Activated CD4-positive, alpha-beta T cell treated with anti-CD3 and anti-CD28 coated beads, Interleukin-2, amount 10 ng/mL, durations not matched to agents 24 days and 14 days (primary cell): ENCODE measurements at regions of chr22 and their contacts with region 1.

Region 1: GRCh38 chr22:22884010-22884887 is 3.4 kb upstream of the IGLL5 start:
- DNase-seq: peak; percentile 94
- H3K4me3 Mint-ChIP-seq: no peak overlapping the region
- H3K27ac Mint-ChIP-seq: no peak overlapping the region
- H3K4me1 Mint-ChIP-seq: peaks cover 14% of the 10 kb centered on the region
- H3K27me3 Mint-ChIP-seq: peaks cover 31% of the 10 kb centered on the region

Region 2: GRCh38 chr22:22787786-22788459 is 96.3 kb before region 1 on chr22:
- intact Hi-C with region 1: loop called (anchors 5 kb)
- DNase-seq: peak; percentile 92
- H3K4me3 Mint-ChIP-seq: no peak overlapping the region
- H3K27ac Mint-ChIP-seq: no peak overlapping the region
- H3K4me1 Mint-ChIP-seq: peaks cover 4% of the 10 kb centered on the region
- H3K27me3 Mint-ChIP-seq: peaks cover 22% of the 10 kb centered on the region

Region 3: GRCh38 chr22:22802339-22802970 is 81.8 kb before region 1 on chr22:
- intact Hi-C with region 1: loop called (anchors 5 kb)
- DNase-seq: peak; percentile 85
- H3K4me3 Mint-ChIP-seq: no peak overlapping the region
- H3K27ac Mint-ChIP-seq: no peak overlapping the region
- H3K4me1 Mint-ChIP-seq: peaks cover 2% of the 10 kb centered on the region
- H3K27me3 Mint-ChIP-seq: peaks cover 28% of the 10 kb centered on the region

Region 4: GRCh38 chr22:22848364-22848866 is 35.8 kb before region 1 on chr22:
- intact Hi-C with region 1: no loop called
- DNase-seq: peak; percentile 92
- H3K4me3 Mint-ChIP-seq: no peak overlapping the region
- H3K27ac Mint-ChIP-seq: no peak overlapping the region
- H3K4me1 Mint-ChIP-seq: peaks cover 7% of the 10 kb centered on the region
- H3K27me3 Mint-ChIP-seq: peaks cover 51% of the 10 kb centered on the region

Region 5: GRCh38 chr22:22928666-22929380 is 44.6 kb after region 1 on chr22:
- intact Hi-C with region 1: loop called (anchors 5 kb)
- DNase-seq: peak; percentile 92
- H3K4me3 Mint-ChIP-seq: peak overlapping the region; percentile 49
- H3K27ac Mint-ChIP-seq: peak overlapping the region; percentile 75
- H3K4me1 Mint-ChIP-seq: peaks cover 44% of the 10 kb centered on the region
- H3K27me3 Mint-ChIP-seq: no peaks in the 10 kb centered on the region

Region 6: DNA sequence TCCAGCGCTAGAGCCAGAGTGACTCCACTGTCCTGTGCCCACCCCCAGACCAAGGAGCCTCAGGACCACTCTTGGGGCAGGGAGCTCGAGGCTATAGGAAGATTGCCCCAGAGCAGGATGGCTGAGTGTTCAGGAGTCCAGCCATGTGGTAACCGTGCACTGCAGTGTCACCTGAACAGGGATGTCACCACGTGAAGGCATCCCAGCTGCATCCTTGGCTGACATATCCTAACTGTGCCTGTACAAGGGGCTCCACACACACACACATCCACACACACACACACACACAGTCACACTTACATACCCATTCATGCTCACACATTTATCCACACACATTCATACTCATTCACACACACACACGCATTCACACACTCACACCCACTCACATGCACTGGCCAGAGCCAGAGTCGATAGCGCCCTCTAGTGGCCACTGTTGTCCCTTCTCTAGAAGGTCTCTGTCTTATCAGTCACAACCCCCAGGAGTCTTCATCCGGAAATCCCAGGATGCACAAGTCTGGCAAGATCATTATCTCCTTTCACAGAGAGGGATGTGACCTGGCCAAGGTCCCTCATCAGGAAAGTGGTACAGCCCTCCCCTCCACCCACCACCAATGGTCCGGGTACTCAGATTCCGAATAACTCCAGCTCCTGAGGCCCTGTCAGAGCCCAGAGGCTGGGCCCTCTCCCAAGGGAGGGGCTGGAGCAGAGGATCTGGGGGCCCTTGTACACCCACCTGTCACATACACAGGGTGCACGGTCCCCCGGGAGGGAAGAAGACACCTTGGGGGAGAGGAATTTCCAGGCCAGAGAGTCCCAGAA is 58.5 kb after region 1 on chr22:
- intact Hi-C with region 1: loop called (anchors 5 kb)
- DNase-seq: peak; percentile 90
- H3K4me3 Mint-ChIP-seq: no peak overlapping the region
- H3K27ac Mint-ChIP-seq: no peak overlapping the region
- H3K4me1 Mint-ChIP-seq: peaks cover 8% of the 10 kb centered on the region
- H3K27me3 Mint-ChIP-seq: peaks cover 24% of the 10 kb centered on the region

Region 7: GRCh38 chr22:23012081-23012622 is 127.9 kb after region 1 on chr22:
- intact Hi-C with region 1: loop called (anchors 10 kb)
- DNase-seq: peak; percentile 77
- H3K4me3 Mint-ChIP-seq: peak overlapping the region; percentile 39
- H3K27ac Mint-ChIP-seq: peak overlapping the region; percentile 57
- H3K4me1 Mint-ChIP-seq: peaks cover 20% of the 10 kb centered on the region
- H3K27me3 Mint-ChIP-seq: peaks cover 43% of the 10 kb centered on the region